Breast epithelium (tissue), 4 donors: ENCODE measurements at regions of chr4 and their contacts with region 1.

Region 1: GRCh38 chr4:117987464-117987863 is 46.8 kb upstream of the NDST3 start:
- DNase-seq: no peak
- H3K4me3 ChIP-seq: no peak overlapping the region
- H3K27ac ChIP-seq: no peak overlapping the region
- H3K4me1 ChIP-seq: no peaks in the 10 kb centered on the region
- H3K27me3 ChIP-seq: no peaks in the 10 kb centered on the region
- CTCF ChIP-seq: no peak
- POLR2A ChIP-seq: no peak

Region 2: DNA sequence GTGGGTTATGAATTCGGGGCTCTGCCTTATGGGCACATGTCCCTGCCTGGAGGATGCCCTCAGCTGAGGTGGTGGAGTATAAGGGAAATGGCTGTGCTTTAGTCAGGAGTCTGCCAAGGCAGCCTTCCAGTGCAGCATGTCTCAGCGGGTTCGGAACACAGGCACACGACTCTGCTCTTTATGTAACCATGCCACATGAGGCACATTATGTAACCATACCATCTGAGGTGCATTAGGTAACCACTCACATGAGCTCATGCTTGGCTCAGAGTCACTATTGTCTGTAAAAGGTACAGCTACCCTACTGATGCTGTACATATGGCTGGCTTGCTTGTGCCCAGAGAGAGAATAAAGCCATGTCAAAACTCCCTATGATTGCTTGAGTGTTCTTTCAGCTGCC is 1625.7 kb before region 1 on chr4:
- intact Hi-C with region 1: loop called (anchors 5 kb)
- DNase-seq: no peak
- H3K4me3 ChIP-seq: no peak overlapping the region
- H3K27ac ChIP-seq: no peak overlapping the region
- H3K4me1 ChIP-seq: no peaks in the 10 kb centered on the region
- H3K27me3 ChIP-seq: no peaks in the 10 kb centered on the region
- CTCF ChIP-seq: no peak
- POLR2A ChIP-seq: no peak

Region 3: GRCh38 chr4:116515959-116516358 is 1471.5 kb before region 1 on chr4:
- intact Hi-C with region 1: no loop called
- DNase-seq: no peak
- H3K4me3 ChIP-seq: no peak overlapping the region
- H3K27ac ChIP-seq: no peak overlapping the region
- H3K4me1 ChIP-seq: no peaks in the 10 kb centered on the region
- H3K27me3 ChIP-seq: no peaks in the 10 kb centered on the region
- CTCF ChIP-seq: no peak
- POLR2A ChIP-seq: no peak

Region 4: DNA sequence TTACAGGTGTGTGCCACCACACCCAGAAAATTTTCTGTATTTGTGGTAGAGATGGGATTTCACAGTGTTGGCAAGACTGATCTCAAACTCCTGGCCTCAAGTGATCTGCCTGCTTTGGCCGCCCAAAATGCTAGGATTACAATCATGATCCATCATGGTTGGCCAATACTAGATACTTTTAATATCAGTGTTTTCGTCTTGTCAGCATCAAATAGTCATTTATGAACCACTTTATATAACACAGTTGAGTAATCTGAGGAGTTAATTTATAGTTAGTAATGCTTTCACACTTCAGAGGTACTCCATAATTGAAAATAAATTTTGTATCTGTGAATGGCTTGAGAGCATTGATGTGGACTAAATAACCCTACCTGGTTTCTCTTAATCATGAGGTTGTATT is 1080.7 kb before region 1 on chr4:
- intact Hi-C with region 1: loop called (anchors 5 kb)
- DNase-seq: no peak
- H3K4me3 ChIP-seq: no peak overlapping the region
- H3K27ac ChIP-seq: no peak overlapping the region
- H3K4me1 ChIP-seq: no peaks in the 10 kb centered on the region
- H3K27me3 ChIP-seq: no peaks in the 10 kb centered on the region
- CTCF ChIP-seq: no peak
- POLR2A ChIP-seq: no peak

Region 5: GRCh38 chr4:118034053-118034785 is 46.8 kb after region 1 on chr4 and contains the start of gene NDST3:
- intact Hi-C with region 1: no loop called
- DNase-seq: peak in 1 of 2 donors; percentile 27
- H3K4me3 ChIP-seq: peak within 1 kb of the TSS; percentile 37 to 65 (median 51)
- H3K27ac ChIP-seq: no peak within 1 kb of the TSS
- H3K4me1 ChIP-seq: no peaks in the 10 kb centered on the region
- H3K27me3 ChIP-seq: peaks cover 0 to 13% of the 10 kb centered on the region in 2 donors
- CTCF ChIP-seq: peak in 1 of 3 donors; percentile 37
- POLR2A ChIP-seq: no peak
- total RNA-seq, gene NDST3: 0.29 TPM in 1 of 3 donors, not detected in the others

Region 6: DNA sequence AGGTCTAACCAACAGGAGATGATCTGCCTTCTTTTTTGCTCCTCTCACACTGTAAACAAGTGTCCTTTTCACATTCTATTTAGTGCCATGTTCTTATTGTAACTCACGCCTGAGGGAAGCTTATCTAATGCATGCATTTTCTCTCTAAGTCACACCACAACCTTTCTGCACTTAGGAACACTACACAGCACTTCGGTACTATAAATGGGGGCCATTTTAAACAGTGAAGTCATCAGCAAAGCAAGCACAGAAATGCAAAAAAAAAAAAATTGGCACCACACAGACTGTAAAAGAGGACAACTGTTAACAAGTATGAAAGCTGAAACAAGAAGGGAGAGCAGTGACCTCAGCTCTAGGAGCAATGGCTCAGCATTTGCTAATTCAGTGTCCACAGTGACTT is 320.2 kb after region 1 on chr4:
- intact Hi-C with region 1: no loop called
- DNase-seq: no peak
- H3K4me3 ChIP-seq: no peak overlapping the region
- H3K27ac ChIP-seq: no peak overlapping the region
- H3K4me1 ChIP-seq: no peaks in the 10 kb centered on the region
- H3K27me3 ChIP-seq: no peaks in the 10 kb centered on the region
- CTCF ChIP-seq: no peak
- POLR2A ChIP-seq: no peak